GM23248 (cell line): ENCODE measurements at regions of chr3 and their contacts with region 1.

Region 1: GRCh38 chr3:42961633-42962032 is 17.5 kb upstream of the GASK1A start:
- DNase-seq: peak; percentile 78
- H3K4me3 ChIP-seq: no peak overlapping the region
- H3K27ac ChIP-seq: no peak overlapping the region
- H3K4me1 ChIP-seq: no peaks in the 10 kb centered on the region
- H3K27me3 ChIP-seq: no peaks in the 10 kb centered on the region

Region 2: GRCh38 chr3:43153216-43154083 is 191.8 kb after region 1 on chr3:
- in situ Hi-C with region 1: loop called (anchors 5 kb)
- DNase-seq: peak; percentile 86
- H3K4me3 ChIP-seq: no peak overlapping the region
- H3K27ac ChIP-seq: peak overlapping the region; percentile 16; the same call in 1 of the 2 replicates
- H3K4me1 ChIP-seq: peaks cover 10% of the 10 kb centered on the region; the same call in 1 of the 2 replicates
- H3K27me3 ChIP-seq: no peaks in the 10 kb centered on the region

Region 3: DNA sequence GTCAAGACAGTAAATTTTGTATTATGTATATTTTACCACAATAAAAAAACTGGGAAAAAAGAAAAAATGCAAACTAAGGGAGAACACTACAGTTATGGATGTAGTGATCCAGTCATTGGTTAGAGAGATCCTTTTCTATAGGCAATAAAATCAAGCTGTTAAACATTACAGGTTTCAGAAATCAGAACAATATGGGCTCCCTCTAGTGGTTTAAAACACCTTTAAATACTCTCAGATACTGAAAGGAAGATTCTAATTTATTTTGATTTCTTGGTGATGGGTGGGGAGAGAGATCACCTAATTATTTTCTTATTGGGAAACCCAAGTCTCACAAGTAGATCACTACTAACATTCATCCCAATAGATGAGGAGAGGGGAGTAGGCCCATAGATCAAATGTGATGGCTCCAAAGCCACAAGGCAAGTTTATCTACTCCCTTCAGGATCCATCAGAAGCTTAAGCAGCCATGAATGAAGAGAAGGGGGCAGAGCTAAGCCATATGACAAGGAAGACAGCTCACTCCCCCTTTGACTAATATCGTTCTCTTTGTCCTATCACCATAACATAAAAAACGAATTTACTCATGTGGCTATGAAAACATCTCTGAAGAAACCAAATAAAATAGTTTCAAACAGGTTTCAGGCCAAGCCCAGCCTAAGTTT is 541.6 kb after region 1 on chr3:
- in situ Hi-C with region 1: loop called (anchors 25 kb)
- DNase-seq: peak; percentile 48
- H3K4me3 ChIP-seq: no peak overlapping the region
- H3K27ac ChIP-seq: no peak overlapping the region
- H3K4me1 ChIP-seq: peaks cover 10% of the 10 kb centered on the region
- H3K27me3 ChIP-seq: no peaks in the 10 kb centered on the region